A673 (cell line): ENCODE measurements at regions of chrX and their contacts with region 1.

Region 1: DNA sequence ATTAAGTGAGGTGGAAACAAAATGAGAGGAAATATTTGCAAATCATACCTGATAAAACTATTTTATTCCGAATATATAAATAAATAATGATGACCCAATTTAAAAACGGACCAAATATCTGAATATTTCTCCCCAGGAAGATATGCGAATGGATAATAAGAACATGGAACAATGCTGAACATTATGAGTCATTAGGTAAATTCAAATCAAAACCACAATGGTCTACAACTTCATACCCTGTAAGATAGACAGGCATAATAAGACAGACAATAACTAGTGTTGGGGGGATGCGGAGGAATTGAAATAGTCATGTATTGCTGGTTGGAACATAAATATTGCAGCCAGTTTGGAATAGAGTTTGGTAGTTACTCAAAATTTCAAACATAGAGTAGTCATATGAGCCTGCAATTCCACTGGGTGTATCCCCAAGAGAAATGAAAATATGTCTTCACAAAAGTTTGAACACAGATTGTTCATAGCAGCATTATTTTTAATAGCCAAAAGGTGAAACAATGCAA is 47.6 kb upstream of the DRP2 start:
- DNase-seq: no peak
- H3K4me3 ChIP-seq: no peak overlapping the region
- H3K27ac ChIP-seq: no peak overlapping the region
- H3K4me1 ChIP-seq: no peaks in the 10 kb centered on the region
- H3K27me3 ChIP-seq: no peaks in the 10 kb centered on the region
- CTCF ChIP-seq: no peak

Region 2: DNA sequence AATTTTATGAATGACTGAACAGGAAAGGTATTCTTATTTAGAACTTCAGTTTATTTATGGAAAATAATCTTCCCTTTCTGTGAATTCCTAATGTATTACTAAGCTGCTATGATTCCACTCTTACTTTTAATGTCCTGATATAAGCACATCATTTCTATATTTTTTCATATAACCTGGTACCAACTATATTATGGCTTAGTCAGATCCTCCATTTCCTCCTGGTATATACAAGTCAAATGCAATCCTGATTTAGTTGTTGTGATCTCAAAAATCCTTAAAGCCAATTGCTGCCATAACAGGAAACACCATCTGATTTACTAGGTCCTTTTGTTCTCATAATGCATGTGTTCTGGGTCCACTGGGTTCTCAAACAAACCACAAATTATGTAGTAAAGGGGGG is 146.8 kb before region 1 on chrX:
- CTCF ChIA-PET with region 1: no interaction called
- POLR2A ChIA-PET with region 1: no interaction called
- intact Hi-C with region 1: no loop called
- DNase-seq: no peak
- H3K4me3 ChIP-seq: no peak overlapping the region
- H3K27ac ChIP-seq: no peak overlapping the region
- H3K4me1 ChIP-seq: no peaks in the 10 kb centered on the region
- H3K27me3 ChIP-seq: no peaks in the 10 kb centered on the region
- CTCF ChIP-seq: no peak

Region 3: GRCh38 chrX:101108284-101108683 is 63.7 kb before region 1 on chrX:
- CTCF ChIA-PET with region 1: no interaction called
- POLR2A ChIA-PET with region 1: interaction called, 14 read pairs
- intact Hi-C with region 1: no loop called
- DNase-seq: no peak
- H3K4me3 ChIP-seq: no peak overlapping the region
- H3K27ac ChIP-seq: no peak overlapping the region
- H3K4me1 ChIP-seq: no peaks in the 10 kb centered on the region
- H3K27me3 ChIP-seq: no peaks in the 10 kb centered on the region
- CTCF ChIP-seq: no peak

Region 4: DNA sequence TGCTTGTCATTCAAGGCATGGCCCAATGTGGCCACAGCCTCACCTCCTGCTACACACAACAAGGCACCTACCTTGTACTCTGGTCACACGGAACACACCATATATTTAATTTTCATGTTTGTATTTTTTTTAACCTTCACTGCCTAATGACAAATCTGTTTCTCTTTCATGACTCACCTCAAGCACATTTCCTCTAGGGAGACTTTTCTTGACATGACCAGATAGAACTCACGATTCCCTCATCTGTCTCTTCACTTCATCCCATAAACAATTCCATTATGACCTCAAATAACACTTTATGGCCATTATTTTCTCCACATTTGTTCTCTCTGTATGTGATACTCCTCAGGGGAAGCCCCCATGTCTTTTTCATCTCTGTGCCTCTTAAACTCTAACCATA is 58.7 kb after region 1 on chrX:
- CTCF ChIA-PET with region 1: no interaction called
- POLR2A ChIA-PET with region 1: no interaction called
- intact Hi-C with region 1: no loop called
- DNase-seq: no peak
- H3K4me3 ChIP-seq: no peak overlapping the region
- H3K27ac ChIP-seq: no peak overlapping the region
- H3K4me1 ChIP-seq: no peaks in the 10 kb centered on the region
- H3K27me3 ChIP-seq: no peaks in the 10 kb centered on the region
- CTCF ChIP-seq: no peak